CD4-positive, alpha-beta T cell (primary cell): ENCODE measurements at regions of chr10 and their contacts with region 1.

Region 1: DNA sequence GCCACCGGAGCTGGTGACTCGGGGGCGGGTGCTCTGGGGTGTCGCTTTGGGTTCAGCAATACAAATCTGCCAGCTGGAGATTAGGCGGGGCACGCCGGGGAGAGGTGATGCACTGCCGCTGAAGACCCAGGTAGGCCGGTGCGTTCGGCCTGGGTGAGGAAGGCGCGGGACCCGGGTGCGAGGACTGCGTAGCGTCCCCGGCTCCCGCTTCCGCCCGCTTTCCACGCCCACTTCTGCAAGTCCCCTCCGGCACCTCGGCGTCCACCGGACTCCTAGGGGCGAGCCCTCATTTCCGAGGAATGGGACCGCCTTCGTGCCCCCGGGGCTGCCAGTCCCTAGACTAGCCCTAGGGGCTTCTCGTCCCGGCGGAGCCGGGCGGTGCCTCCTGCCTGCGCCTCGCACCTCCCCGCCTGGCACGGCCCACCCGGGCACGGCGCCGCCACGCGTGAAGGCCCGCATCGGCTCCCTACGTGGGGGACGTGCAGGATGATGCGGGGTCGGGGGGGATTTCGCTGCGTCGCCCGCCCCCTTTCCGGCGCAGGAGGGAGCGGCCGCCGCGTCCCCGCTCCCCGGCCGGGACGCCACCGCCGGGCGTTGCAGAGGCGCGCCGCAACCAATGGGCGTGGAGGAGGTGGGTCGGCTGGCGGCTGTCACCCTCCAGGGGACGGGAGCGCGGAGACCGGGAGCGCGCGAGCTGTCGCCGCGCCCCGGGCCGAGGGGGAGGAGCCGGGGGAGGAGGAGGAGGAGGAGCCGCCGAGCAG is 40.0 kb downstream of the HK1 start:
- DNase-seq: peak; percentile 83 to 96 (median 90)
- ATAC-seq: peak; percentile 90
- H3K4me3 ChIP-seq: peak overlapping the region; percentile 80
- H3K4me3 Mint-ChIP-seq: peak overlapping the region; percentile 98
- H3K27ac ChIP-seq: peak overlapping the region; percentile 86 to 93
- H3K27ac Mint-ChIP-seq: peak overlapping the region; percentile 95
- H3K4me1 ChIP-seq: peaks cover 45% of the 10 kb centered on the region
- H3K4me1 Mint-ChIP-seq: peaks cover 42% of the 10 kb centered on the region
- H3K27me3 ChIP-seq: no peaks in the 10 kb centered on the region
- H3K27me3 Mint-ChIP-seq: no peaks in the 10 kb centered on the region
- CTCF ChIP-seq: no peak

Region 2: GRCh38 chr10:69335063-69335587 is 16.8 kb after region 1 on chr10:
- CTCF ChIA-PET with region 1: interaction called, 4 read pairs
- POLR2A ChIA-PET with region 1: interaction called, 10 read pairs
- intact Hi-C with region 1: no loop called
- DNase-seq: peak in 5 of 14 experiments; percentile 25 to 55 (median 51)
- ATAC-seq: peak; percentile 82
- H3K4me3 ChIP-seq: peak overlapping the region; percentile 5
- H3K4me3 Mint-ChIP-seq: peak overlapping the region; percentile 74
- H3K27ac ChIP-seq: peak overlapping the region in 1 of 2 donors; percentile 38
- H3K27ac Mint-ChIP-seq: peak overlapping the region; percentile 85
- H3K4me1 ChIP-seq: peaks cover 67% of the 10 kb centered on the region
- H3K4me1 Mint-ChIP-seq: peaks cover 83% of the 10 kb centered on the region
- H3K27me3 ChIP-seq: no peaks in the 10 kb centered on the region
- H3K27me3 Mint-ChIP-seq: no peaks in the 10 kb centered on the region
- CTCF ChIP-seq: no peak

Region 3: GRCh38 chr10:69348816-69349541 is 30.7 kb after region 1 on chr10:
- CTCF ChIA-PET with region 1: no interaction called
- POLR2A ChIA-PET with region 1: interaction called, 30 read pairs
- intact Hi-C with region 1: loop called in 1 of 2 experiments (anchors 2 kb)
- DNase-seq: peak in 3 of 14 experiments; percentile 31 to 47 (median 31)
- ATAC-seq: peak; percentile 11
- H3K4me3 ChIP-seq: no peak overlapping the region
- H3K4me3 Mint-ChIP-seq: peak overlapping the region; percentile 77
- H3K27ac ChIP-seq: peak overlapping the region; percentile 48 to 53
- H3K27ac Mint-ChIP-seq: peak overlapping the region; percentile 90
- H3K4me1 ChIP-seq: peaks cover 74% of the 10 kb centered on the region
- H3K4me1 Mint-ChIP-seq: peaks cover 84% of the 10 kb centered on the region
- H3K27me3 ChIP-seq: no peaks in the 10 kb centered on the region
- H3K27me3 Mint-ChIP-seq: no peaks in the 10 kb centered on the region
- CTCF ChIP-seq: no peak

Region 4: GRCh38 chr10:69360485-69361324 is 42.4 kb after region 1 on chr10:
- CTCF ChIA-PET with region 1: interaction called, 4 read pairs
- POLR2A ChIA-PET with region 1: interaction called, 20 read pairs
- intact Hi-C with region 1: loop called (anchors 1 to 2 kb)
- DNase-seq: no peak
- ATAC-seq: no peak
- H3K4me3 ChIP-seq: peak overlapping the region; percentile 33
- H3K4me3 Mint-ChIP-seq: peak overlapping the region; percentile 79
- H3K27ac ChIP-seq: peak overlapping the region; percentile 33 to 55
- H3K27ac Mint-ChIP-seq: peak overlapping the region; percentile 94
- H3K4me1 ChIP-seq: peaks cover 52% of the 10 kb centered on the region
- H3K4me1 Mint-ChIP-seq: peaks cover 77% of the 10 kb centered on the region
- H3K27me3 ChIP-seq: no peaks in the 10 kb centered on the region
- H3K27me3 Mint-ChIP-seq: no peaks in the 10 kb centered on the region
- CTCF ChIP-seq: no peak

Region 5: GRCh38 chr10:69629897-69630650 is 311.8 kb after region 1 on chr10 and contains the start of gene FAM241B:
- CTCF ChIA-PET with region 1: no interaction called
- POLR2A ChIA-PET with region 1: no interaction called
- intact Hi-C with region 1: loop called in 1 of 2 experiments (anchors 2 kb)
- DNase-seq: peak; percentile 60 to 89 (median 72)
- ATAC-seq: peak; percentile 97
- H3K4me3 ChIP-seq: peak within 1 kb of the TSS; percentile 58
- H3K4me3 Mint-ChIP-seq: peak within 1 kb of the TSS; percentile 87
- H3K27ac ChIP-seq: peak within 1 kb of the TSS in 1 of 2 donors; percentile 25
- H3K27ac Mint-ChIP-seq: peak within 1 kb of the TSS; percentile 67
- H3K4me1 ChIP-seq: peaks cover 23% of the 10 kb centered on the region
- H3K4me1 Mint-ChIP-seq: peaks cover 19% of the 10 kb centered on the region
- H3K27me3 ChIP-seq: no peaks in the 10 kb centered on the region
- H3K27me3 Mint-ChIP-seq: no peaks in the 10 kb centered on the region
- CTCF ChIP-seq: peak; percentile 100
- total RNA-seq, gene FAM241B: 14.1 to 17.5 TPM